SK-N-SH (cell line): ENCODE measurements at regions of chr12 and their contacts with region 1.

Region 1: DNA sequence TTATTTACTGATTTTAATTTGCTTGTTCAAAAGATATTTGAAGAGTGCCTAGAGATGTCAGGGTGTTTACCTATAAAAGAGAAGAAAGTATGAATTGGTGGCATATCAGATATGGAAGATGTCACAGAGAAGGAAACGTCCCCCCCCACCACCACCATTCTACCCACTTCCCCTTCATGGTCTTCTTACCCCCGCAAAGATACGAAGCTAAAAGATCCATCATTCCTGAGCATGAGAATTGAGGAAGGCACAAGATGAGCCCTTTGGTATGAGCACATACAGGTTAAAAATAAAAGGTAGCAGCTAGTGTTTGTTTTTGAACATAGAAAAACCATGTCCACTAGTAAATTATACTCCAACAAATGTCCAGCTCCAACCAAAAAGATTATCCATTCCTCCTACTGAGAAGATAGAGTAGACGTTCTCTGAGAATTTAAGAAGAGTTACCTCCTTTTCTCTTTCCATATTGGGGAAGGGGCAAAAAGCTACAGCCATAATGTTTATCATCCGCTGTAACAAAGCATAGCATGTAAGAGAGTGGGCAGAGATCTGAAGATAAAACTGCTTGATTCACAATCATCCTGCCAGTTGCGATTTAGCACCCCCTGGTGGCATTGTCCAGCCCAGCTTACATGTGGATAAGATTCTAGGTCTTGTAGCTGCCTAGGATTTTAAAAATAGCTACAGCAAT is 29.1 kb downstream of the NFYB start:
- DNase-seq: peak; percentile 73
- H3K4me3 ChIP-seq: no peak overlapping the region; a peak in 1 of 4 replicates
- H3K27ac ChIP-seq: peak overlapping the region in 1 of 2 experiments; percentile 44; a peak in 2 of 4 replicates
- H3K4me1 ChIP-seq: no peaks in the 10 kb centered on the region; a peak in 2 of 4 replicates
- H3K27me3 ChIP-seq: no peaks in the 10 kb centered on the region
- CTCF ChIP-seq: peak; percentile 96
- EP300 ChIP-seq: no peak
- RAD21 ChIP-seq: peak; percentile 93

Region 2: GRCh38 chr12:103884316-103884715 is 224.6 kb before region 1 on chr12:
- CTCF ChIA-PET with region 1: interaction called, 28 read pairs
- POLR2A ChIA-PET with region 1: no interaction called
- DNase-seq: peak; percentile 51
- H3K4me3 ChIP-seq: no peak overlapping the region
- H3K27ac ChIP-seq: 0 out of 4 replicates have a peak overlapping the region, but pooled peaks of 1 of the 2 experiments have one; percentile 3
- H3K4me1 ChIP-seq: peaks cover 0 to 9% of the 10 kb centered on the region in 2 experiments; a peak in 2 of 4 replicates
- H3K27me3 ChIP-seq: no peaks in the 10 kb centered on the region
- CTCF ChIP-seq: peak; percentile 62
- EP300 ChIP-seq: peak in 1 of 2 experiments; percentile 33; a peak in 1 of 4 replicates
- RAD21 ChIP-seq: peak; percentile 84

Region 3: DNA sequence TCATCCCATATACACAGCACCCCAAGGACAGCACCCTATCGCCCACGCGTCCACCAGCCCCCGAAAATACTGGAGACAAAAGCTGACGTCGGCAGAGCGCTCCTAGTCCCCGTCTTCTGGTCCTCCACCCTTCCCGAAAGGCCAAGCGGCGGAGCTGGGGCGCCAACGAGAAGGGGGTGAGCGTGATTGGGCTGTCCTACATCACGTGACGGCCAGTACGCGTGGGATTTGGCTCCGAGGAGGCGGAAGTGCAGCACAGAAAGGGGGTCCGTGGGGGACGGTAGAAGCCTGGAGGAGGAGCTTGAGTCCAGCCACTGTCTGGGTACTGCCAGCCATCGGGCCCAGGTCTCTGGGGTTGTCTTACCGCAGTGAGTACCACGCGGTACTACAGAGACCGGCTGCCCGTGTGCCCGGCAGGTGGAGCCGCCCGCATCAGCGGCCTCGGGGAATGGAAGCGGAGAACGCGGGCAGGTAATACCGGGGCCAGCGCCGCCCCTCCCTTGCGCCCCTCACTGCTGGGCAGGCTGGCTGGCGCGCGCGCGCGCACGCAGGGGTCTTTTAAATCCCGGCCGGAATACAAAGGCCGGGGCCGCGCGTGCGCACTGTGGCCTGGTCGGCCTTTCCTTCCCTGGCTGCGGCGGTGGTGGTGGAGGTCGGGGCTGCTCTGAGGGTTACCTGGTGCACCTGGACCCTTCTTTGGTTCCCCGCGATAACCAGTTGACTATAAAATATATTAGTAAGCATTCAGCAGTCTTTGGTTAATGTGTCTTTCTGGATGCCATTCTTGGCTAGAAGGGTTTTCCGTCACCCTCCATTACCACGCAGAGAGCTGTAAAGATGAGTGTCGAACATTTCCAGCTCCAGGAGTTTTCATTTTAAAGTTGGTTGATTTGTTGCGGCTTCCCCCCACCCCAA is 143.1 kb before region 1 on chr12 and contains the start of gene TDG:
- CTCF ChIA-PET with region 1: interaction called, 17 read pairs
- POLR2A ChIA-PET with region 1: interaction called, 21 read pairs
- DNase-seq: peak; percentile 94
- H3K4me3 ChIP-seq: peak within 1 kb of the TSS; percentile 67 to 97
- H3K27ac ChIP-seq: peak within 1 kb of the TSS; percentile 91 to 92
- H3K4me1 ChIP-seq: peaks cover 6 to 22% of the 10 kb centered on the region in 2 experiments
- H3K27me3 ChIP-seq: no peaks in the 10 kb centered on the region
- CTCF ChIP-seq: peak; percentile 34
- EP300 ChIP-seq: no peak; a peak in 1 of 4 replicates
- RAD21 ChIP-seq: no peak
- polyA plus RNA-seq, gene TDG: 11.3 and 17.9 TPM in 2 replicates

Region 4: DNA sequence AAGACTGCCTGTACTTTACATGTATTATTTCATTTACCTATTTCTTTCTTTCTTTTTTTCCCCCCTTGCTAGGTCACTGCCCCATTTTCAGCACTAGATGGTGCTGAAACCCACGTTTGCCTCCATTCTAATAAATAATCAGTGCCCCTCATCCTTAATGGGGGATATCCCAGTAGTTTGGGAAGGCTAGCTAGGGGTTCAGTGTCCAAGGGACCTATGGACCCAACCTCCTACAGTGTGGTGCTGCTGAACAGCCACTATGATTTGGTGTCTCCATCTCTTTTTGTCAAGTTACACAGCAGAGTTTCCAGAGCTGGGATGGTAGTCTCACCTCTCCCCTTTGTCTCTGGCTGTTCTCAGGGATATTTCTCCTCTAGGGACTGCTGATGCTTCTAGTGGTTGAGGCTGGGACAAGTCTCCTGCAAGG is 51.1 kb before region 1 on chr12:
- CTCF ChIA-PET with region 1: interaction called, 15 read pairs
- POLR2A ChIA-PET with region 1: no interaction called
- DNase-seq: peak; percentile 40
- H3K4me3 ChIP-seq: no peak overlapping the region
- H3K27ac ChIP-seq: no peak overlapping the region
- H3K4me1 ChIP-seq: peaks cover 0 to 24% of the 10 kb centered on the region in 2 experiments; a peak in 2 of 4 replicates
- H3K27me3 ChIP-seq: no peaks in the 10 kb centered on the region
- CTCF ChIP-seq: peak; percentile 72
- EP300 ChIP-seq: no peak
- RAD21 ChIP-seq: peak; percentile 70

Region 5: GRCh38 chr12:104083769-104084475 is 25.0 kb before region 1 on chr12:
- CTCF ChIA-PET with region 1: interaction called, 24 read pairs
- POLR2A ChIA-PET with region 1: no interaction called
- DNase-seq: no peak
- H3K4me3 ChIP-seq: no peak overlapping the region
- H3K27ac ChIP-seq: no peak overlapping the region
- H3K4me1 ChIP-seq: no peaks in the 10 kb centered on the region
- H3K27me3 ChIP-seq: no peaks in the 10 kb centered on the region
- CTCF ChIP-seq: no peak
- EP300 ChIP-seq: no peak
- RAD21 ChIP-seq: no peak

Region 6: GRCh38 chr12:104097954-104098353 is 10.9 kb before region 1 on chr12:
- CTCF ChIA-PET with region 1: interaction called, 21 read pairs
- POLR2A ChIA-PET with region 1: no interaction called
- DNase-seq: no peak
- H3K4me3 ChIP-seq: no peak overlapping the region
- H3K27ac ChIP-seq: no peak overlapping the region
- H3K4me1 ChIP-seq: no peaks in the 10 kb centered on the region
- H3K27me3 ChIP-seq: no peaks in the 10 kb centered on the region
- CTCF ChIP-seq: no peak
- EP300 ChIP-seq: no peak
- RAD21 ChIP-seq: no peak

Region 7: GRCh38 chr12:104485651-104486362 is 376.9 kb after region 1 on chr12:
- CTCF ChIA-PET with region 1: no interaction called
- POLR2A ChIA-PET with region 1: no interaction called
- DNase-seq: no peak
- H3K4me3 ChIP-seq: no peak overlapping the region
- H3K27ac ChIP-seq: no peak overlapping the region
- H3K4me1 ChIP-seq: no peaks in the 10 kb centered on the region
- H3K27me3 ChIP-seq: no peaks in the 10 kb centered on the region
- CTCF ChIP-seq: no peak
- EP300 ChIP-seq: no peak
- RAD21 ChIP-seq: no peak